ENCODE measurements at regions of chr10 and their contacts with region 1.

Region 1: DNA sequence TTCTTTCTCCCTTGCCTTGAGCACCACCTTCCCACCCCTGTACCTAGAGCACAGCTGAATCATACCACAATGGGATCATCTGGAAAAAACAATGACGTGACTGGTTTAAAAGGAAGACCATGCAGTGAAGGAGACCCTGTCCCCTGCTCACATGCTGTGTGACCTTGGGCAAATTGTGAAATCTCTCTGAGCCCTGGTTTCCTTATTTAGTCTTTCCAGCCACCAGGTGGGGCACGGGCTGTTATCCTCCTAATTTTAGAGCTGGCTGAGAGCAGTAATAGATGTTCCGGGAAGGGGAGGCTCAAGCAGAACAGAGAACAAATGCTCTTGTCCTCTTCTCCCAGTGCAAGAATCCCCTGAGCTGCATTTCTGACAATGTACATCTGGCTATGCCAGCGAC is 198.3 kb downstream of the RPS24 start:
- DNase-seq: no peak
- H3K4me3 ChIP-seq: no peak overlapping the region
- H3K27ac ChIP-seq: no peak overlapping the region
- H3K4me1 ChIP-seq: no peaks in the 10 kb centered on the region
- H3K27me3 ChIP-seq: no peaks in the 10 kb centered on the region
- CTCF ChIP-seq: no peak

Region 2: GRCh38 chr10:78165617-78166016 is 66.3 kb before region 1 on chr10:
- CTCF ChIA-PET with region 1: no interaction called
- POLR2A ChIA-PET with region 1: no interaction called
- intact Hi-C with region 1: no loop called
- DNase-seq: no peak
- H3K4me3 ChIP-seq: no peak overlapping the region
- H3K27ac ChIP-seq: no peak overlapping the region
- H3K4me1 ChIP-seq: no peaks in the 10 kb centered on the region
- H3K27me3 ChIP-seq: no peaks in the 10 kb centered on the region
- CTCF ChIP-seq: peak; percentile 29

Region 3: DNA sequence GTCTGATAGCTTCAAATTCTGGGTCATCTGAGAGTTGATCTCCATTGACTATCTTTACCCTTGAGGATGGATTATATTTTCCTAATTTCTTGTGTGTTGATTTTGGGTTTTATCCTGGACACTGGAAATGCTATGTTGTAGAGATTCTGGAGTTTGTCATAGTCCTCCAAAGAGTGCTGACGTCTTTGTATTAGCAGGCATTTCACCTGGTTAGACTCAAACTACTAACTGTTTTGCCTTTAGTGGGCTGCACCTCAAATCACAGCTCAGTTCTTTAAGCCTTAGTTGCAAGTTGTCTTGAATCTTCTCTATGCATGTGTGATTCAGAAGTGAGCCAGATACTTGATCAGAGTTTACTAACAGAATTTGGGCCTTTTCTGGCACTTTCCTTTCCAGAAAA is 66.1 kb after region 1 on chr10:
- CTCF ChIA-PET with region 1: interaction called, 17 read pairs
- POLR2A ChIA-PET with region 1: no interaction called
- intact Hi-C with region 1: no loop called
- DNase-seq: no peak
- H3K4me3 ChIP-seq: no peak overlapping the region
- H3K27ac ChIP-seq: no peak overlapping the region
- H3K4me1 ChIP-seq: peaks cover 7% of the 10 kb centered on the region
- H3K27me3 ChIP-seq: no peaks in the 10 kb centered on the region
- CTCF ChIP-seq: no peak

Measured in A673 (cell line).